ENCODE measurements at regions of chr15 and their contacts with region 1.

Region 1: DNA sequence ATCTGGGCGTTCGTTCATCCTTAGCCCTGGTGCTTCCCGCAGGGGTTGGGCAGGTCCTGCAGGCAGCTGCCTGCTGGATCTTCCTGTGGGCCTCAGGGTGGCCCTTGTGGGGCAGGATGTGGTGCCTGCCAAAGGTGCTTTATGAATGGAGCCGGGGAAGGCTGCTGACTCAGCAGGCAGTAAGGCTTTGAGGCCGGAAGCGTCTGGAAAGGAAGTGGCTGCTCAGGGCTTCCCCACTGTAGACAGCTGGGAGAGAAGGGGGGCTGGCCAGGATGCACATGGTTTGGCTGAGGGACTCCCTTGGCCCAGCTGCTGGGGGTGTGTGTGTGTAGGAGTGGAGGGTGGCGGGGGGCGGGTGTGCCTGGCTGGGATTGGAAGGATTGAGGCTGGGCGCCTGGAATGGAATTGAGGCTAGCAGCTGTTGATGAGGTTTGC is 12.9 kb downstream of the CD276 start:
- DNase-seq: peak; percentile 96 to 100 (median 99)
- H3K4me3 ChIP-seq: peak overlapping the region in 2 of 7 experiments; percentile 23 to 40
- H3K27ac ChIP-seq: no peak overlapping the region
- H3K4me1 ChIP-seq: peaks cover 0 to 45% (median 33%) of the 10 kb centered on the region in 4 experiments
- H3K27me3 ChIP-seq: peaks cover 0 to 35% (median 5%) of the 10 kb centered on the region in 5 experiments

Region 2: DNA sequence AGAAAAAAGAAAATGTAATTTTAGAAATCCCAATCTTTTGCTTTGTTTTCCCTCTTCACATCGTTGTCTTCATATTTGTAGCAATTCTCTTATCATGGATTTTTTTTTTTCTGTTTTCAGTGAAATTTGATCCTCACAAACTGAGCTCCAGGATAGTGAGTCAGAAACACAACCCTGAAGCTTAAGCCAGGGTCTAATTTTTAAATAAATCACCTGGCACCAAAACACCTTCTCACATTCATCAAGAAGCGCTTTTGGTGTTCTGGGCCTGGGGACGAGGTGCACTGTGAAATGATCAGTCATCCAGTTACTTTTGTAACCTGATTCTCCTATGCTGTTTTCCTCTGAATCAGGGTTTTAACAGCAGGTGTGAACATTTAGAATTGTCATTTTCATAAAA is 166.4 kb before region 1 on chr15:
- CTCF ChIA-PET with region 1: no interaction called
- POLR2A ChIA-PET with region 1: no interaction called
- DNase-seq: no peak
- H3K4me3 ChIP-seq: no peak overlapping the region
- H3K27ac ChIP-seq: no peak overlapping the region
- H3K4me1 ChIP-seq: no peaks in the 10 kb centered on the region
- H3K27me3 ChIP-seq: peaks cover 0 to 2% (median under 1%) of the 10 kb centered on the region in 5 experiments

Region 3: GRCh38 chr15:73560501-73561117 is 136.4 kb before region 1 on chr15:
- CTCF ChIA-PET with region 1: interaction called, 72 read pairs
- POLR2A ChIA-PET with region 1: interaction called, 3 read pairs
- DNase-seq: peak; percentile 77 to 90 (median 87)
- H3K4me3 ChIP-seq: no peak overlapping the region
- H3K27ac ChIP-seq: no peak overlapping the region
- H3K4me1 ChIP-seq: peaks cover 0 to 15% (median 7%) of the 10 kb centered on the region in 4 experiments
- H3K27me3 ChIP-seq: no peaks in the 10 kb centered on the region

Region 4: DNA sequence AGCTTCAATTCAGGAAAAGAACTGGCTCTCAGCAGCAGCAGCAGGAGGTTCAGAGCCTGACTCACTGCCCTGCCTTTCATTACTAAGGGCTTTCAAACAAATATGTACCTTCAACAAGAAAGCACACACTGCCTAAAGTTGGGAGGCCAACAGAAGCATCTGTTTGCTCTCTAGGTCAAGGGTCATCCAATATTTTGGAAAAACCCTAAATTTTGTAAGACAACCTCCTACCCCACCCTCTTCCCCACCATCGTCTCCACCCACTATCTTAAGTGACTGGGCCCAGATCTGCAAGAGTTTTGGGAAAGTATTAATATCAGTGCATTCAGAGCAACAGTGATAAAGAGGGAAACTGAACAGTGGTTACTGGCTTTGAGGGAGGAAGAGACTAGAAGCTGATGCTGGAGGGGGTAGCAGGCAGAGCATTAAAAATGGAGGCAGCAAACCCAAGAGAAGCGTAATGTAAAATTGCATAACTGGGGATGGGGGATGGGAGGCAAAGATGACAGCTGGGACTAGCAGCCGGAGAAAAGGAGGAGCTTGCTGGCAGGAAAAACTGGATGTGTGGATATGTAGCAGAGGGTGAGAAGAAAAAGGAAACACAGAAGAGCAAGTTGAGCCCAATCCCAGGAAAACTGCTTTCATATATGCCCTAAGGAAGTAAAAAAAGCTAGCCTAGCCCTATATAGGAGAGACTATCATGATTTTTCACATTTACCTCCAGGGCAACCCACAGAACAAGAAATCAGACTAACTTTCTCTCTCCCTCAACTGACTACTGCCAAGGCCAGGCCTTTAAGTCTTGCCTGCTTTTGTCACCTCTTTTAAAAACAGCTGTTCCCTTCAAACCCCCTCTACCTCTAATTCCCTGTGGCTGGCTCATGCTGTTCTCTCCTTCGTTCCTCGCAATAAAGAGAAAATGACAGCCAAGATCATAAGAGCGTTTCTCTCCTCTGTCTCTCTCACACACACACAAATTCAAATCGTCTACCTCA is 95.3 kb before region 1 on chr15:
- CTCF ChIA-PET with region 1: no interaction called
- POLR2A ChIA-PET with region 1: no interaction called
- DNase-seq: peak in 1 of 3 donors; percentile 29
- H3K4me3 ChIP-seq: peak overlapping the region in 1 of 7 experiments; percentile 4
- H3K27ac ChIP-seq: no peak overlapping the region
- H3K4me1 ChIP-seq: peaks cover 4 to 41% (median 18%) of the 10 kb centered on the region in 4 experiments
- H3K27me3 ChIP-seq: no peaks in the 10 kb centered on the region

Region 5: GRCh38 chr15:73624530-73624929 is 72.5 kb before region 1 on chr15:
- CTCF ChIA-PET with region 1: interaction called, 287 read pairs
- POLR2A ChIA-PET with region 1: no interaction called
- DNase-seq: no peak
- H3K4me3 ChIP-seq: no peak overlapping the region
- H3K27ac ChIP-seq: no peak overlapping the region
- H3K4me1 ChIP-seq: peaks cover 0 to 12% (median 6%) of the 10 kb centered on the region in 4 experiments
- H3K27me3 ChIP-seq: no peaks in the 10 kb centered on the region

Region 6: GRCh38 chr15:73677146-73677607 is 19.9 kb before region 1 on chr15:
- CTCF ChIA-PET with region 1: interaction called, 235 read pairs
- POLR2A ChIA-PET with region 1: interaction called, 3 read pairs
- DNase-seq: peak; percentile 40 to 45 (median 42)
- H3K4me3 ChIP-seq: no peak overlapping the region
- H3K27ac ChIP-seq: no peak overlapping the region
- H3K4me1 ChIP-seq: peaks cover 0 to 29% (median 8%) of the 10 kb centered on the region in 4 experiments
- H3K27me3 ChIP-seq: peaks cover 0 to 6% (median 0%) of the 10 kb centered on the region in 5 experiments